ENCODE measurements at regions of chr2 and their contacts with region 1.

Region 1: GRCh38 chr2:132651115-132652045 is 18.6 kb downstream of the LYPD1 start:
- ATAC-seq: peak in 6 of 8 experiments; percentile 53 to 65 (median 58)
- H3K4me3 ChIP-seq: no peak overlapping the region
- H3K27ac ChIP-seq: no peak overlapping the region
- H3K4me1 ChIP-seq: peaks cover 38 to 49% of the 10 kb centered on the region in 2 donors

Region 2: DNA sequence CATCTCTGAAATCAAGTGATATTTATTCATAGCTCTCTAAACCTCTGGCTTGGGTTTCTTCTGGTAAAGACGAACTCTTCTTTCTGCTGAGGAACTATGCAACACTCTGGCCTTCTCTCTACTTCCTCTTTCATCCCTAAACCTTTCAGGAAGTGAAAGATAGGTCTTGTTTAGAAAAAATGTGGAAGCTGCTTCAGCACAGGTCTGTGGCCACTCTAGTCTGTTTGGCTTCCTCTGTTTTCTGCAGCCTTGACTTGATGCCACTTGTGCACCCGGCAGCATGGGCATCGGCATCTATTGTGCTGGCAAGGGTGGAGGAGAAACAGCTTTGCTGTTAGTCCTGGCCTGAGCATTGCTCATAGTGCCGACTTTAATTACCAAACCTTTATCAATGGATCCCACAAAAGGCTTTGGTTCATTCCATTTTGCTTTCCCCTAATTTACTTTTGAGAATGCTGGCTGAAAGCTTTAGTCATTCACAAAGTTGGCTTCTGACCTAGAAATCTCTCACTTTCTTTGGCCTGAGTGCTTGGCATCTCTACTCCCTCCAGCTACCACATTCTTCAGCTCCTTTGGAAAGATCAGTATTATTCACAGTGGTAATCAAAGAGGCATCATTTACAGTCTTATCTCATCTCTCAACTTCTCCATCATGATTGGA is 266.8 kb before region 1 on chr2:
- in situ Hi-C with region 1: no loop called
- ATAC-seq: no peak
- H3K4me3 ChIP-seq: no peak overlapping the region
- H3K27ac ChIP-seq: no peak overlapping the region
- H3K4me1 ChIP-seq: no peaks in the 10 kb centered on the region

Region 3: GRCh38 chr2:133171393-133172004 is 520.1 kb after region 1 on chr2:
- in situ Hi-C with region 1: loop called in 2 of 9 experiments (anchors 25 kb)
- ATAC-seq: peak; percentile 49 to 73 (median 58)
- H3K4me3 ChIP-seq: no peak overlapping the region
- H3K27ac ChIP-seq: no peak overlapping the region
- H3K4me1 ChIP-seq: peaks cover 5 to 29% of the 10 kb centered on the region in 2 donors

Measured in motor neuron (in vitro differentiated cells).